Activated CD4-positive, alpha-beta T cell treated with anti-CD3 and anti-CD28 coated beads for 36 hours (primary cell): ENCODE measurements at regions of chr4 and their contacts with region 1.

Region 1: GRCh38 chr4:145498430-145498829 is 16.8 kb downstream of the SMAD1 start:
- DNase-seq: no peak
- ATAC-seq: no peak
- H3K4me3 Mint-ChIP-seq: no peak overlapping the region
- H3K27ac Mint-ChIP-seq: no peak overlapping the region
- H3K4me1 Mint-ChIP-seq: peaks cover 37% of the 10 kb centered on the region
- H3K27me3 Mint-ChIP-seq: no peaks in the 10 kb centered on the region

Region 2: DNA sequence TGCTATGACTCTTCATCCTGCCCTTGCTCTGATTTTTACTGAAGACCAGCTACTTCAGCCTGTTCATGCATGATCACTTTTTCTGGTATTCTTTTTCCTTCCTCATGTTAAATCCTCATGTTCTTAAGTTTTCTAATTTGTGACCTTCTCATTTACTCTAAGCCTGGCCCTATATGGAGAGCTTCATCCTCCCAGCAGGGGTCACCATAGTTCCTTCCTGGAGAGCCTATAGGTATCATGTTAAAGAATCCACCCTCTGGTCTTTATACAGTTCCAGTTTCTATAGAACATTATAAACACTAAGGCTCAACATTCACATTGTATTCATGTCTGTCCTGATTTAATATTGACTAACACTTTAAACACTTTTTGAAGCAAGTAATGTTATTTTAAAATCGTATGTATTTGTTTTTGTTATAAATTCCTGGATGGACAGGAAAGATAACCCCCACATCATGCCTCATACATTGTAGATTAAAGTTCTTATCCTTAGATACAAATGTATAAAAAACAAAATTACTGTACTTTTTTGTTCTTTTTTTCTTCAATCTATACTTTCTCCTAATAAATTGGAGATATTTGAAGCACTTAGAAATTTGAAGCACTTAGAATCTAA is 264.2 kb before region 1 on chr4:
- CTCF ChIA-PET with region 1: no interaction called
- POLR2A ChIA-PET with region 1: no interaction called
- intact Hi-C with region 1: loop called in 1 of 2 experiments (anchors 2 kb)
- DNase-seq: peak; percentile 78
- ATAC-seq: peak; percentile 98
- H3K4me3 Mint-ChIP-seq: no peak overlapping the region
- H3K27ac Mint-ChIP-seq: no peak overlapping the region
- H3K4me1 Mint-ChIP-seq: no peaks in the 10 kb centered on the region
- H3K27me3 Mint-ChIP-seq: no peaks in the 10 kb centered on the region

Region 3: DNA sequence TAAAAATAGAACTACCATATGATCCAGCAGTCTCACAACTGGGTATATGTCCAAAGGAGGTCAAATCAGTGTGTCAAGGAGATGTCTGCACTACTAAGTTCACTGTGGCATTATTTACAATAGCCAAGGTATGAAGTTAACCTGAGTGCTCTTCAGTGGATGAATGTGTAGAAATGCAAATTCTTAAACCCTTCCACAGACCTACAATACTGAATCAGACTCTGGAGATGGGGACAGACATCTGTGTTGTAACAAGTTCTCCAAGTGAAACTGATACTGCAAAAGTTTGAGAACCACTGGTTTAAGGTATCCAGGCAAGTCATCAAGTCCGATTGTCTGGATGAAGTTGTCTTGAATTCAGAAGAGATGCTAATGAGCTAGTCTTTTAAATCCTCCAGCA is 21.7 kb after region 1 on chr4:
- CTCF ChIA-PET with region 1: no interaction called
- POLR2A ChIA-PET with region 1: no interaction called
- intact Hi-C with region 1: no loop called
- DNase-seq: no peak
- ATAC-seq: peak; percentile 23
- H3K4me3 Mint-ChIP-seq: no peak overlapping the region
- H3K27ac Mint-ChIP-seq: no peak overlapping the region
- H3K4me1 Mint-ChIP-seq: peaks cover 19% of the 10 kb centered on the region
- H3K27me3 Mint-ChIP-seq: no peaks in the 10 kb centered on the region